Activated T-helper 1 cell treated with anti-CD3 and anti-CD28 coated beads, Interleukin-12 subunit alpha, Interleukin-12 subunit beta, Interleukin-2, Interleukin-4 antibody, amounts not matched to agents 30 ng/mL and 10 ng/mL and 1 ng/mL, durations not matched to agents 14 hours and 24 hours and 36 hours (primary cell): ENCODE measurements at regions of chr2 and their contacts with region 1.

Region 1: DNA sequence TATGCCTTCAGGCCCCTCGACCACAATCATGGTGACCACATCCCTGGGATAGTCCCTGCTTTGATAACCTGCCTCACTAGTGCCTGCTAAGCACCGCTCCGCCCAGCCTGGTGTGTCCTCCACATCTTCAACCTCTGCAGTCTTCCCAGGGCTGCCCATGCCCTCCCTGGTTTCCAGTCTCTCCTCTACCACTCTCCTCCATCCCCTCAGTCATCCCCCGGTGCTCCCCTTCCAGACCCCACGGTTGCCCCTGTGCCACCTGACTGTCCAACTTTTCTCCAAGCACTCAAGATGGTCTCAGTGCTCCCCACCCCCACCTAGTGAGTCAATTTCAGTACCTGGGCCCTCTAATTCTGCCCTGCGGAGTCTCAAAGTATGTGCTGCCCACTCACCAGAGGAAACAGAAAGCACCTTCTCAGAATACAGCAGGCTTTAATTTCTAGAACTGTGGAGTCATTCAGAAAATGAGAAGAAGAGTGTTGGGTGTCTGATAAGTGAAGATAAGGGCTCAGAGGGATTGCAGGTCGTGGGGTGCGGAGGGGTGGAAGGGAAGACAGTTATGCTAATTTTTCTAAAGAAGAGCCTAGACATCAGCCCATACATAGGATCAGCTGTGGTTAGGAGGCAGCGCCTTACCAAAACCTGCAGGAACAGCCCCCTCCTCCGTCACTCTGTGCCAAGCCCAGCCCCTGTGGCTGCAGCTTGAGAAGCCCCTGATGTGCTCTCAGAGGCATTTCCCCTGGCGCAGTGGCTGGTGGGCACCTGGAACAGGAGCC is 53.6 kb upstream of the CAB39 start:
- DNase-seq: peak; percentile 70
- H3K4me3 Mint-ChIP-seq: peak overlapping the region; percentile 84
- H3K27ac Mint-ChIP-seq: peak overlapping the region; percentile 99
- H3K4me1 Mint-ChIP-seq: peaks cover 91% of the 10 kb centered on the region
- H3K27me3 Mint-ChIP-seq: no peaks in the 10 kb centered on the region

Region 2: DNA sequence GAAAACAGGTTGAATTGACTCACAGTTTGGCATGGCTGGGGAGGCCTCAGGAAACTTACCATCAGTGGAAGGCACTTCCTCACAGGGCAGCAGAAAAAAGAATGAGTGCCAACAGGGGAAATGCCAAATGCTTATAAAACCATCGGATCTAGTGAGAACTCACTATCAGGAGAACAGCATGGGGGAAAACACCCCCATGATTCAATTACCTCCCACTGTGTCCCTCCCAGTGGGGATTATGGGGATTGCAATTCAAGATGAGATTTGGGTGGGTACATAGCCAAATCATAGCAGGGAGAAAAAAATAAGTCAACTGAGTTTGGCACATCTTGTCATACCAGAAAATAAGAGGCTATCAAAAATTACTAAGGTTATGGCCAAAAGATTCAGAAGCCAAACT is 833.6 kb before region 1 on chr2:
- intact Hi-C with region 1: loop called (anchors 2 kb)
- DNase-seq: no peak
- H3K4me3 Mint-ChIP-seq: no peak overlapping the region
- H3K27ac Mint-ChIP-seq: no peak overlapping the region
- H3K4me1 Mint-ChIP-seq: peaks cover 37% of the 10 kb centered on the region
- H3K27me3 Mint-ChIP-seq: no peaks in the 10 kb centered on the region

Region 3: DNA sequence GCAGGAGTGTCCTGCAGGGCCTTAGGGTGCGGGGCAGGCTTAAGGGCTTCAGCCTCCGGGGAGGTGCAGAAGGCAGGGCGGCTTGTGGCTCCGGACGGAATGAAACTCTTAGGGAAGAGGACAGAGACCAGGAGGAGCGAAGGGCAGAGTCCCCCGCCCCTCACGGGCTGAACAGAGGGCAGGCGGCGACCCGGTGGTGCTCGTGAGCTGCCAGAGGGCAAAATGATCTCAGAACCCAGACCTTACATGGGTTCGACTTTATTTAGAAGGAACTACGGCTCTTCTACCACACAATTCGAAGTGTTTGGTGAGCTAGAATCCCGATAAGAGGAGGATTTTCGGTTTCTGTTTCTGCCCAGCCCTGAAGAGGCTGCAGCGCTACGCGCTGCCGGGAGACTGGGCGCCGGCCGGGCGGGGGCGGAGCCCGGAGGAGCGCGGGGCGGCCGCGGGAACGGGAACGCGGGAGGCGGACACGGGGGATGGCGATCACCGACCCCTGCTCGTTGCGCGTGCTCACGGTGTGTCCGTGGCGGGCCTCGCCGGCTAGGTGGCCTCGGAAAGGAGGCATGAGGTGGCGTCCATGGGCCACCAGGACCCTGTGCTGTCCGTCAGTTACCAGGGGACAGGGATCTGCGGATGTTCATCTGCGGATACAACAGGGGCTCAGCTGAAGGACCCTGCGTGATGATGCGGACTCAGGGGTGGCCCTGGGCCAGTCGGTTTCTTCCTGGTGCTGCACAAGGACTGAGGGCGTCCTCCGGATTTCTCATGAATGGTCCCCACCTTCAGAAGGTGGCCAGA is 247.3 kb before region 1 on chr2:
- intact Hi-C with region 1: loop called (anchors 2 kb)
- DNase-seq: peak; percentile 76
- H3K4me3 Mint-ChIP-seq: peak overlapping the region; percentile 93
- H3K27ac Mint-ChIP-seq: peak overlapping the region; percentile 99
- H3K4me1 Mint-ChIP-seq: peaks cover 79% of the 10 kb centered on the region
- H3K27me3 Mint-ChIP-seq: no peaks in the 10 kb centered on the region

Region 4: GRCh38 chr2:230627806-230628724 is 31.0 kb before region 1 on chr2:
- intact Hi-C with region 1: loop called (anchors 5 kb)
- DNase-seq: no peak
- H3K4me3 Mint-ChIP-seq: no peak overlapping the region
- H3K27ac Mint-ChIP-seq: no peak overlapping the region
- H3K4me1 Mint-ChIP-seq: peaks cover 14% of the 10 kb centered on the region
- H3K27me3 Mint-ChIP-seq: no peaks in the 10 kb centered on the region

Region 5: GRCh38 chr2:230694241-230694640 is 35.2 kb after region 1 on chr2:
- intact Hi-C with region 1: loop called (anchors 2 kb)
- DNase-seq: peak; percentile 38
- H3K4me3 Mint-ChIP-seq: peak overlapping the region; percentile 27
- H3K27ac Mint-ChIP-seq: peak overlapping the region; percentile 75
- H3K4me1 Mint-ChIP-seq: peaks cover 27% of the 10 kb centered on the region
- H3K27me3 Mint-ChIP-seq: no peaks in the 10 kb centered on the region

Region 6: DNA sequence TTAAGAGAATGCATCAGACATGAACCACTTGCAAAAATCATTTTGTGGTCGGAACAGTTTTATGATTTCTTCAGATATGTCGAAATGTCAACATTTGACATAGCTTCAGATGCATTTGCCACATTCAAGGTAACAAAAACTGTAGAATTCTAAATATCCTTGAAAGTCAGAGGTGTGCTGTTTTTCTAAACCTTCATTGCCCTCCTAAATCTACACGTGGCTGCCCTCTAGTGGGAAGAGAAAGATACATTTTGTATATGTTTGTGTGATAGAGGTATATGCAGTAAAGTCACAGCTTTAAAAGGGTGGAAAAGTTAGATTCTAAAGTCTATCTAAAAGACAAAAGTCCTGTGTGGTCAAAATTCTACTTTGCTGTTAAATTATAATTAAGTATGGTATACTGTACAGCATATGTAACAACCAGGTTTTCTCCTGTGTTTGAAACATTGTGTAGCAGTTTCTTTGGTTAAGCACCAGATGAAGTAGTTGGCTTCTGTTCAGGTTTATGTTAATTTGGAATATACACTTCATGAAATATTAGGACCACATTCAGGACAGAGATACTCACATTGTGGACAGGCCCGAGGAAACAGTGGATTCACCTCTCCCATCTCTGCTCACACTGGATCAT is 139.8 kb after region 1 on chr2:
- intact Hi-C with region 1: loop called (anchors 1 kb)
- DNase-seq: peak; percentile 27
- H3K4me3 Mint-ChIP-seq: no peak overlapping the region
- H3K27ac Mint-ChIP-seq: no peak overlapping the region
- H3K4me1 Mint-ChIP-seq: peaks cover 26% of the 10 kb centered on the region
- H3K27me3 Mint-ChIP-seq: peaks cover under 1% of the 10 kb centered on the region